T-cell (primary cell): ENCODE measurements at regions of chr1 and their contacts with region 1.

Region 1: DNA sequence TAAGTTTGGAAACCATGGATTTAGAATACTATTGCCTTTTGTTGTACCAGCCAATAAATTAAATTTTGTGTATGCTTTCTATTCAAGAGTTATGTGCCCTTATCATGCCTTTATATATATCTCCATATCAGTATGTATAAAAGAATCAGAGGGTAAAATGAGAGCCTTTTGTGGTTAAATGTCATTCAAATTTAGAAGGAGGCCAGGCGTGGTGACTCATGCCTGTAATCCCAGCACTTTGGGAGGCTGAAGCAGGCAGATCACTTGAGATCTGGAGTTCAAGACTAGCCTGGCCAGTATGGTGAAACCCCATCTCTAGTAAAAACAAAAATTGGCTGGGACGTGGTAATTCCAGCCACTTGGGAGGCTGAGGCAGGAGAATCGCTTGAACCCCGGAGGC is 88.9 kb downstream of the XPR1 start:
- DNase-seq: no peak
- ATAC-seq: no peak
- H3K4me3 ChIP-seq: no peak overlapping the region
- H3K4me3 Mint-ChIP-seq: no peak overlapping the region
- H3K27ac ChIP-seq: no peak overlapping the region
- H3K27ac Mint-ChIP-seq: no peak overlapping the region
- H3K4me1 ChIP-seq: no peaks in the 10 kb centered on the region
- H3K4me1 Mint-ChIP-seq: peaks cover 3 to 11% (median 4%) of the 10 kb centered on the region in 3 donors
- H3K27me3 ChIP-seq: no peaks in the 10 kb centered on the region
- H3K27me3 Mint-ChIP-seq: no peaks in the 10 kb centered on the region

Region 2: DNA sequence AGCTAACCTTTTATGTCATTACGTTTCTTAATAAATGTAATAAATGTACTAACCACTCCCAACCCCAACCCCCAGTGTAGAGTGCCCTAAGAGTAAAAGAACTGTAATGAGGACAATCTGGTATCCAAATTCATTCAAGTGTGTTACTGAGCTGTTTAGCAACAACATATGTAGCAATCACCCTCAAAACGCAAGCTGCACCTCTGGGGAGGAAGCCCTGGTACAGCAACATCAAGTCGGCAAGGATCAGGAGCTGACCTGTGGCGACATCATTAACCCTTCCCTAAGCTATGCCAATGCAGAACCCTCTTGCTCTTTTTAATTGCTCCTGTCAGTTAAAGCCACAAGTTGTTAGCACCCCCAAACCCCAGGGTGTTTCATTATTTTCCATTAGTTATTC is 254.8 kb after region 1 on chr1:
- CTCF ChIA-PET with region 1: interaction called in 1 of 2 experiments, 10 read pairs
- POLR2A ChIA-PET with region 1: no interaction called
- DNase-seq: no peak
- ATAC-seq: no peak
- H3K4me3 ChIP-seq: no peak overlapping the region
- H3K4me3 Mint-ChIP-seq: no peak overlapping the region
- H3K27ac ChIP-seq: no peak overlapping the region
- H3K27ac Mint-ChIP-seq: no peak overlapping the region
- H3K4me1 ChIP-seq: peaks cover 3 to 7% of the 10 kb centered on the region in 2 experiments
- H3K4me1 Mint-ChIP-seq: peaks cover 22 to 25% (median 23%) of the 10 kb centered on the region in 3 donors
- H3K27me3 ChIP-seq: no peaks in the 10 kb centered on the region
- H3K27me3 Mint-ChIP-seq: no peaks in the 10 kb centered on the region